ENCODE measurements at regions of chr3 and their contacts with region 1.

Region 1: DNA sequence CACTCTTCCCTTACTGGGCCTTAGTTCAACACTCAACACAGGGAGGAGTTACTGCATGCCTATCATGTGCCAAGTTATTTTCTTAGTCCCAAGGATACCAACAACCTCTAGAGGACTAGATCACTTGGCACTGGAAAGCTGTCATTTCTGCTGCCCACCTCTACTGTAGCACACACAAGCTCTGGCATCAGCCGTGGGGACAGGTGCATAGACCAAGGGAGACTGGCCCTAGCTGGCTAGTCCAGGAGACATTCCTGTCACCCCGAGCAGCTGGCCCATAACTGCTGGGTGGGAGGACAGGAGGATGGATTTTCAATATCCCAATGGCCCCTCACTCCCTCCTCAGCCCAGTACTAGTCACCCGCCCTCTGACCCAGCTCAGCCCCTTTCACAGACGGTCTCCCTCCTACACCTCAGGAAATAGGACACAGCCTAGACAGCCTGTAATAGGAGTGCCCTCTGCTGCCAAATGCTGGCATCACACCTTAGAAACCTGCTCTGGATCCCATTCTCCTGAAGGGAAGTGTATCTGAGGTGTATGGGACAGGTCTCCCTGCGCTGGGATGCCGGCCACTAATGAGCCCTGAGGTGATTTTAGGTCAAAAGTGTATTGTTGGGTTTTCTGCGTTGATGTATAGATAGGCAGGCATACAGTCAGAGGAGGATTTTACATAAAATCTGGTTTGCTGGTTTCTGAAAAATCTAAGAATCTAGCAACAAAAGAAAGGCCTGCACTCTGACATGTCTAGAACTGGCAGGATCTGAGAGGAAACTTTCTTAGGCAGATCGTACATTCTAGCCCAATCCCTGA is 3.4 kb upstream of the DZIP1L start:
- DNase-seq: peak in 4 of 5 donors; percentile 54 to 74 (median 71)
- ATAC-seq: peak; percentile 40 to 69 (median 64)
- H3K4me3 ChIP-seq: no peak overlapping the region
- H3K27ac ChIP-seq: no peak overlapping the region
- H3K4me1 ChIP-seq: peaks cover 0 to 26% (median 9%) of the 10 kb centered on the region in 12 donors
- H3K27me3 ChIP-seq: no peaks in the 10 kb centered on the region
- CTCF ChIP-seq: peak; percentile 69 to 86 (median 81)
- POLR2A ChIP-seq: no peak

Region 2: GRCh38 chr3:138009476-138010272 is 109.1 kb before region 1 on chr3 and contains the start of gene CLDN18:
- intact Hi-C with region 1: loop called in 1 of 10 experiments (anchors 5 kb)
- DNase-seq: no peak
- ATAC-seq: no peak
- H3K4me3 ChIP-seq: no peak within 1 kb of the TSS
- H3K27ac ChIP-seq: no peak within 1 kb of the TSS
- H3K4me1 ChIP-seq: peaks cover 0 to 7% (median 0%) of the 10 kb centered on the region in 12 donors
- H3K27me3 ChIP-seq: no peaks in the 10 kb centered on the region
- CTCF ChIP-seq: no peak
- POLR2A ChIP-seq: no peak
- total RNA-seq, gene CLDN18: not detected

Region 3: GRCh38 chr3:138068579-138069174 is 50.1 kb before region 1 on chr3:
- intact Hi-C with region 1: loop called (anchors 1 to 2 kb)
- DNase-seq: peak; percentile 75 to 89 (median 81)
- ATAC-seq: peak; percentile 44 to 95 (median 91)
- H3K4me3 ChIP-seq: no peak overlapping the region
- H3K27ac ChIP-seq: no peak overlapping the region
- H3K4me1 ChIP-seq: no peaks in the 10 kb centered on the region
- H3K27me3 ChIP-seq: no peaks in the 10 kb centered on the region
- CTCF ChIP-seq: peak; percentile 91 to 99 (median 98)
- POLR2A ChIP-seq: no peak

Region 4: DNA sequence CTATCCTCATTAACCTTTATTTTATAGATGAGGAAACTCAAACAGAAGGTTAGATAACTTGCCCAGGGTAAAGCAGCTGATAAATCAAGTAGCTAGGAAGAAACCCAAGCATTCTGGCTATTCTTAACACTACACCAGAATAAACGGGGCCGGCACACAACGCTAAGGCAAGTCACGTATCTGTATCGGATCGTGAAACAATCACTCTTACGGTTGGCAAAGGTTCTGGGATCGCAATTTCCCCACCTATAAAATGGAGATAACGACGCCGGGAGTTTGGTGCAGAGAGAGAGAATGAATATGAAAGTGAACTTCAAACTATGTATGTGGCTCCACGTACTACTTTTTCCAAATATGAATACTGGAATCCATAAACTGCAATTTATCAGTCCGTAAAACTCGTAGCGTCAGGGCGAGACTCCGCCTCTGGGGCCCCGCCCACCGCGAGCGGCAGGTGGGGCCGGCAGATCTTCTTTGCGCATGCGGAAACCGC is 68.0 kb after region 1 on chr3:
- intact Hi-C with region 1: loop called in 1 of 10 experiments (anchors 5 kb)
- DNase-seq: peak; percentile 88 to 94 (median 92)
- ATAC-seq: peak; percentile 95 to 99 (median 97)
- H3K4me3 ChIP-seq: peak overlapping the region; percentile 62 to 96 (median 78)
- H3K27ac ChIP-seq: peak overlapping the region; percentile 83 to 99 (median 93)
- H3K4me1 ChIP-seq: peaks cover 0 to 35% (median 24%) of the 10 kb centered on the region in 12 donors
- H3K27me3 ChIP-seq: peaks cover 0 to 7% (median 0%) of the 10 kb centered on the region in 9 donors
- CTCF ChIP-seq: no peak
- POLR2A ChIP-seq: no peak

Measured in heart left ventricle (tissue), 16 donors.